Endothelial cell of umbilical vein (primary cell): ENCODE measurements at regions of chr17 and their contacts with region 1.

Region 1: DNA sequence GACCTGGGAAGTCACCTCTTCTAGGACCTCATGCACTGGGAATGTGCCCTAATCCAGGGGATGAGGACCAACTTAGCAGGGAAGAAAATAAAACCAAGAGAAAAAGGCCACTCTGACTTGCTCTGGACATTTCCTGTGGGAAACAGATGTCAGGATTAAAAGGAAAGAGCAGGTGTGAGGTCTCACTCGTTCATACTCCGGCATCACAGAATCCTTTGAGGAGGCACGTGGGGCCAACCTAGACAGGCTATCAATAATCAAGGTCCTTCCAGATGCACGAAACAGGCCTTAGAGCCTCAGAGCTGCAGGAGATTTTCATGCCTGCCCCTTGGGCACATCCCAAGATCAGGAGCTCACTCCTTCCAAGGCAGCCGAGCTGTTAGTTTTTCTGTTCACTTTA is 321.5 kb upstream of the CCL2 start:
- DNase-seq: no peak
- H3K4me3 ChIP-seq: no peak overlapping the region
- H3K27ac ChIP-seq: no peak overlapping the region
- H3K4me1 ChIP-seq: no peaks in the 10 kb centered on the region
- H3K27me3 ChIP-seq: no peaks in the 10 kb centered on the region
- CTCF ChIP-seq: no peak
- POLR2A ChIP-seq: no peak

Region 2: GRCh38 chr17:33892717-33893591 is 40.6 kb before region 1 on chr17:
- CTCF ChIA-PET with region 1: no interaction called
- POLR2A ChIA-PET with region 1: no interaction called
- dilution Hi-C with region 1: no loop called
- intact Hi-C with region 1: no loop called
- DNase-seq: no peak
- H3K4me3 ChIP-seq: no peak overlapping the region
- H3K27ac ChIP-seq: no peak overlapping the region
- H3K4me1 ChIP-seq: no peaks in the 10 kb centered on the region
- H3K27me3 ChIP-seq: no peaks in the 10 kb centered on the region
- CTCF ChIP-seq: no peak
- POLR2A ChIP-seq: no peak

Region 3: DNA sequence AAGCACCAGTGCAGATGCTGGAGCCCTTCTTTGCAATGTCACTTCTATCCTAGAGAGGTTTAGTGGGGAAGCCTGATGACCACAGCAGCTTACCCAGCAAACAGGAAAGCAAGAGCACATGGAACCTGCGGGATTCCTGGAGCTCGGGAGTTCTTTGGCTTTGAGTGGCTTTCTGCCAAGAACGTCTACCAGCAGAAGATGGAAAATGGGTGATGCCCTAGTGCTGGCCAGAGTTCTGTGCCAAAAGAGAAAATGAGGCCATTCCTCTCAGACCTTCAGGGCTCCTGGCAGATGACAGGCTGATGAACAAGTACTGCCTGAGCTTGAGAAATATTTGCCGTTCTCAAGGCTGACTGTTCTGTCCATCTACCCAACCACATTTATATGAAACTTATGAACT is 10.6 kb before region 1 on chr17:
- CTCF ChIA-PET with region 1: no interaction called
- POLR2A ChIA-PET with region 1: no interaction called
- dilution Hi-C with region 1: no loop called
- intact Hi-C with region 1: no loop called
- DNase-seq: no peak
- H3K4me3 ChIP-seq: no peak overlapping the region
- H3K27ac ChIP-seq: no peak overlapping the region
- H3K4me1 ChIP-seq: no peaks in the 10 kb centered on the region
- H3K27me3 ChIP-seq: no peaks in the 10 kb centered on the region
- CTCF ChIP-seq: no peak
- POLR2A ChIP-seq: no peak

Region 4: GRCh38 chr17:33949100-33949499 is 15.5 kb after region 1 on chr17:
- CTCF ChIA-PET with region 1: no interaction called
- POLR2A ChIA-PET with region 1: no interaction called
- dilution Hi-C with region 1: no loop called
- intact Hi-C with region 1: no loop called
- DNase-seq: no peak
- H3K4me3 ChIP-seq: no peak overlapping the region
- H3K27ac ChIP-seq: no peak overlapping the region
- H3K4me1 ChIP-seq: no peaks in the 10 kb centered on the region
- H3K27me3 ChIP-seq: no peaks in the 10 kb centered on the region
- CTCF ChIP-seq: peak in 1 of 2 donors; percentile 16
- POLR2A ChIP-seq: no peak

Region 5: GRCh38 chr17:34337701-34338100 is 404.1 kb after region 1 on chr17:
- CTCF ChIA-PET with region 1: no interaction called
- POLR2A ChIA-PET with region 1: no interaction called
- dilution Hi-C with region 1: no loop called
- intact Hi-C with region 1: loop called (anchors 10 kb)
- DNase-seq: no peak
- H3K4me3 ChIP-seq: no peak overlapping the region
- H3K27ac ChIP-seq: no peak overlapping the region
- H3K4me1 ChIP-seq: no peaks in the 10 kb centered on the region
- H3K27me3 ChIP-seq: peaks cover 0 to 7% of the 10 kb centered on the region in 2 experiments
- CTCF ChIP-seq: no peak
- POLR2A ChIP-seq: no peak